ENCODE measurements at regions of chr10 and their contacts with region 1.

Region 1: GRCh38 chr10:311901-312665 is 176.8 kb downstream of the ZMYND11 start:
- DNase-seq: no peak
- ATAC-seq: peak; percentile 72
- H3K4me3 Mint-ChIP-seq: peak overlapping the region; percentile 77
- H3K27ac Mint-ChIP-seq: peak overlapping the region; percentile 90
- H3K4me1 Mint-ChIP-seq: peaks cover 96% of the 10 kb centered on the region
- H3K27me3 Mint-ChIP-seq: no peaks in the 10 kb centered on the region
- CTCF ChIP-seq: no peak

Region 2: DNA sequence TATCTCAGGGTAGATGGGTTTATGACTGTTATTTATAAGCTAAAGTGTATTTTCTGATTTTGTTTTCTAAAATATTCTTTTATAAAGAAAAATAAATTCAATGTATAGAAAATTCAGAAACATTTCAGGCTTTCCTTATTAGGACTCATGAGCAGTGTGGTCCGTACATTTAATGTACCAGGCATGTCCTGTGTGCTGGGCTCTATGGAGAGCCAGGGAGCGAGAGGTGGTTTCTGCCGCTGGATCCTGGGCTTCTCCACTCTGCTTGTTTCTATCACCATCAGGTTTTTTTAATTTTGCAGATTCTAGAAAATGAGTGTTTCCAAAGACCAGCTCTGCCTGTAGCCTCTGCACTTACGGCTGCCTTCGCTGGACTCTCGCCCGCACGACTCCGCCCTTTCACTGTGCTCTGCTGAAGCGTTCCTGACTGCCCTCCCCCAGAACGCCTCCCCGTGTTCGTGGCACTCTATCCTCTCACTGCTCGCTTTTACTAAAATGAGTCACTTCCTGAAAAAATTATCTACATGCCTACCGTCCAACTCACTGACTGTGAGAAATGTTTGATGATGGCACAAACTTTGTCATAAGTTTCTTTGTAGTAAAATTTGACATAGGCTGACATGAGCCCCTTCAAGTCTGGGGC is 11.7 kb after region 1 on chr10:
- CTCF ChIA-PET with region 1: no interaction called
- POLR2A ChIA-PET with region 1: interaction called, 23 read pairs
- intact Hi-C with region 1: loop called (anchors 1 kb)
- DNase-seq: no peak
- ATAC-seq: peak; percentile 99
- H3K4me3 Mint-ChIP-seq: peak overlapping the region; percentile 64
- H3K27ac Mint-ChIP-seq: peak overlapping the region; percentile 22
- H3K4me1 Mint-ChIP-seq: peaks cover 33% of the 10 kb centered on the region
- H3K27me3 Mint-ChIP-seq: peaks cover 2% of the 10 kb centered on the region
- CTCF ChIP-seq: no peak

Region 3: GRCh38 chr10:1434912-1435692 is 1123.0 kb after region 1 on chr10:
- CTCF ChIA-PET with region 1: no interaction called
- POLR2A ChIA-PET with region 1: no interaction called
- intact Hi-C with region 1: no loop called
- DNase-seq: no peak
- ATAC-seq: no peak
- H3K4me3 Mint-ChIP-seq: no peak overlapping the region
- H3K27ac Mint-ChIP-seq: no peak overlapping the region
- H3K4me1 Mint-ChIP-seq: no peaks in the 10 kb centered on the region
- H3K27me3 Mint-ChIP-seq: peaks cover 5% of the 10 kb centered on the region
- CTCF ChIP-seq: no peak